ENCODE measurements at regions of chr3 and their contacts with region 1.

Region 1: GRCh38 chr3:535566-536416 is 339.2 kb downstream of the CHL1 start:
- DNase-seq: peak; percentile 60 to 88
- ATAC-seq: peak; percentile 84
- H3K4me3 ChIP-seq: peak overlapping the region; percentile 48 to 52
- H3K27ac ChIP-seq: peak overlapping the region; percentile 21 to 65
- H3K4me1 ChIP-seq: no peaks in the 10 kb centered on the region
- H3K27me3 ChIP-seq: no peaks in the 10 kb centered on the region

Region 2: GRCh38 chr3:481680-482079 is 54.1 kb before region 1 on chr3:
- intact Hi-C with region 1: loop called in 1 of 2 experiments (anchors 5 kb)
- DNase-seq: no peak
- ATAC-seq: no peak
- H3K4me3 ChIP-seq: no peak overlapping the region
- H3K27ac ChIP-seq: no peak overlapping the region
- H3K4me1 ChIP-seq: peaks cover 0 to 2% of the 10 kb centered on the region in 2 donors
- H3K27me3 ChIP-seq: no peaks in the 10 kb centered on the region

Region 3: GRCh38 chr3:1330107-1330506 is 794.3 kb after region 1 on chr3:
- intact Hi-C with region 1: no loop called
- DNase-seq: no peak
- ATAC-seq: no peak
- H3K4me3 ChIP-seq: no peak overlapping the region
- H3K27ac ChIP-seq: no peak overlapping the region
- H3K4me1 ChIP-seq: no peaks in the 10 kb centered on the region
- H3K27me3 ChIP-seq: no peaks in the 10 kb centered on the region